Left colon (tissue), 2 donors: ENCODE measurements at regions of chr19 and their contacts with region 1.

Region 1: GRCh38 chr19:3544742-3545668 is 6.0 kb downstream of the TEKTIP1 start:
- DNase-seq: peak; percentile 56 to 79
- ATAC-seq: peak; percentile 74

Region 2: GRCh38 chr19:3618144-3618810 is 73.3 kb after region 1 on chr19:
- intact Hi-C with region 1: loop called (anchors 5 kb)
- DNase-seq: peak; percentile 58 to 72
- ATAC-seq: peak; percentile 75